PC-9 (cell line): ENCODE measurements at regions of chr11 and their contacts with region 1.

Region 1: DNA sequence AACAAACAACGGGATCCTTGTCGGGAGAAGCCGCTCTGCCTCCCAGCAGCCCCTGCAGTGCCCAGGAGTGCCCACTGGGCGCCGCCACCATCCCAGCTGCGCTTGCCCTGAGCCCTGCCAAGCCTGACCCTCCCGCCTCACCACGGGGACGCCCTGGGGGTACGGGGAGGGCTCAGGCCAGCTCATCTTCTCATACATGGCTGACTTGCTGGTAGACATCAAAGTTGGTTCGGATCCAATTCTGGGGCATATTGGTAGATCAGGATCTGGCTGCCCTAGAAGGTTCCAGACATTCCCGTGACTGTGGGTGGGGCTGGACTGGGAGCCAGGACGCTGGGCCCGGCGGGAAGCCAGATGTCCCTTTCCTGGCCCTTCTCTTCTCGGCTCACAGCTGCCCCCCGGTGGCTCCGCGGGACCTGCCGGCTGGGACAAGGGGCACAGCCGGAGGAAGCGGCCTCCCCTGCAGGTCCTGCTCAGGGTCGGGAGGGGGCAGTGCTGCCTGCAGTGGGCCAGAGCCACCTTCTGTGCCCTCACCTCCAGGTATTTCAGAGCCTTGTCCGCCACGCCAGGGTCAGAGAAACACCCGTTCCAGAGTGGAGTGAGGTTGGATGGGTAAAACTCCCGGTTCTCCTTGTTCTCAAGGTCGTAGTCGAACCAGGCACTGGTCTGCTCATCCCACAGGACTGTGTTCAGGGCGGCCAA is 10.6 kb upstream of the TREH start:
- DNase-seq: peak; percentile 82 to 92
- H3K4me3 ChIP-seq: peak overlapping the region; percentile 61
- H3K27ac ChIP-seq: no peak overlapping the region
- H3K4me1 ChIP-seq: peaks cover 5% of the 10 kb centered on the region
- H3K27me3 ChIP-seq: no peaks in the 10 kb centered on the region
- CTCF ChIP-seq: peak; percentile 91

Region 2: GRCh38 chr11:118746988-118747585 is 57.1 kb after region 1 on chr11:
- CTCF ChIA-PET with region 1: interaction called, 15 read pairs
- POLR2A ChIA-PET with region 1: no interaction called
- intact Hi-C with region 1: no loop called
- DNase-seq: no peak
- H3K4me3 ChIP-seq: no peak overlapping the region
- H3K27ac ChIP-seq: no peak overlapping the region
- H3K4me1 ChIP-seq: no peaks in the 10 kb centered on the region
- H3K27me3 ChIP-seq: no peaks in the 10 kb centered on the region
- CTCF ChIP-seq: no peak

Region 3: GRCh38 chr11:118757876-118758399 is 67.9 kb after region 1 on chr11:
- CTCF ChIA-PET with region 1: interaction called, 7 read pairs
- POLR2A ChIA-PET with region 1: no interaction called
- intact Hi-C with region 1: loop called (anchors 5 kb)
- DNase-seq: no peak
- H3K4me3 ChIP-seq: no peak overlapping the region
- H3K27ac ChIP-seq: peak overlapping the region; percentile 22
- H3K4me1 ChIP-seq: no peaks in the 10 kb centered on the region
- H3K27me3 ChIP-seq: no peaks in the 10 kb centered on the region
- CTCF ChIP-seq: no peak

Region 4: DNA sequence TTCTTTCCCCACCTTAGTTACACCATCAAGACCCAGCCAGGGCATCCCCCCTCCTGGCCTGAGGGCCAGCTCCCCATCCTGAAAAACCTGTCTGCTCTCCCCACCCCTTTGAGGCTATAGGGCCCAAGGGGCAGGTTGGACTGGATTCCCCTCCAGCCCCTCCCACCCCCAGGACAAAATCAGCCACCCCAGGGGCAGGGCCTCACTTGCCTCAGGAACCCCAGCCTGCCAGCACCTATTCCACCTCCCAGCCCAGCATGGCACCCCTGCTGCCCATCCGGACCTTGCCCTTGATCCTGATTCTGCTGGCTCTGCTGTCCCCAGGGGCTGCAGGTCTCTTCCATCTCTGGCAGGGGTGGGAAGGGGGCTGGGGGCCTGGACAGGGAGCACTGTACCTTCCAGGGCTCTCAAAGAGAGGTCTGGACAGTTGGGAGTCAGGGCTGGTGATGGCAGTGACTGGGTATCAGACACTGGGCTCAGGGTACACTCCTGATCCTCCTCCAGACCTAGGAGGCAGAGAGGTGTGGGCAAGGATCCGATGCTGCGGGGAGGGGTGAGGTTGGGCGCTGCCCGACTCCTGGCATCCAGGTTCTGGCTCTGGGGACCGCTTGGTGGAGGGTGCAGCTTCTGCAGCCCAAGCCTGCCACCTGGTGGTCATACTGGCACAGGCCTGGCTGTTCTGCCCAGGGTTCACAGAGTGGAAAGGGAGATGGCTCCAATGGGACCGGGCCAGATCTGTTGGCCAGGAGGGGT is 266.3 kb after region 1 on chr11 and contains the start of gene UPK2:
- CTCF ChIA-PET with region 1: no interaction called
- POLR2A ChIA-PET with region 1: no interaction called
- intact Hi-C with region 1: loop called (anchors 1 kb)
- DNase-seq: peak; percentile 92 to 93
- H3K4me3 ChIP-seq: peak within 1 kb of the TSS; percentile 49
- H3K27ac ChIP-seq: peak within 1 kb of the TSS; percentile 62
- H3K4me1 ChIP-seq: peaks cover 26% of the 10 kb centered on the region
- H3K27me3 ChIP-seq: no peaks in the 10 kb centered on the region
- CTCF ChIP-seq: peak; percentile 97
- total RNA-seq, gene UPK2: 17.1 and 23.2 TPM in 2 replicates